HEK293 (cell line): ENCODE measurements at regions of chr6 and their contacts with region 1.

Region 1: GRCh38 chr6:132483779-132484679 is 28.9 kb downstream of the STX7 start:
- H3K4me3 ChIP-seq: no peak overlapping the region
- H3K27ac ChIP-seq: no peak overlapping the region
- H3K4me1 ChIP-seq: peaks cover 5% of the 10 kb centered on the region
- CTCF ChIP-seq: peak; percentile 53

Region 2: DNA sequence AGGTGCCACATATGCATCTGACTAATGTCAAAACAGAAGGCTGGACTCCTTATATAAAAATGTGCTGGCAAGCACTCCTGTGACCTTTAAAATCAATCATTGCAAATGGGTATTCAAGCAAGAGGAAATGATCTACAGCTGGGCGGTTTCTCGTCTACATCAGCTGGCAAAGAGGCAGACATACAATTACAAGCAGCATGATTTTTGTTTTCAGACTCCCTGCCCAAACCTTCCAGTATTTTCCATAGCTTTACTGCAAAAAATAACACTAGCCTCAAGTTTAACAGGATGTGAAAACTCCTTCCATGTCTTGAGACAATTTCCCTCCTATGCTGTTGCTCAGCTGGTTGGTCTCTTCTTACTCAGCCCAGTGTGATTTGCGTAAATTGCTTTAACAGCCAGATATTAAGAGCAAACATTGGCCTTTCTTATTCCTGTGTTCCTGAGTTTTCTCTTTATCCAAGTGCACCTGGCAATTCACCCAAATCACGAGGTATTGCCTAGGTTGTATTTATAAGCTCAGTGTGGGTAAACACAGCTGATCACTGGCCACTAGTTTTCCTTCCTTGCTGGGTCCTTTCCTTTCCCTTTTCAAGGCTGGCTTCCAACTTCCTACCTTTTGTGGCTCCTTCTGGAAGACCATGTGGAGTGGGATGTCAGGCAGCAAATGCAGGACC is 213.2 kb before region 1 on chr6:
- CTCF ChIA-PET with region 1: interaction called, 16 read pairs
- POLR2A ChIA-PET with region 1: no interaction called
- H3K4me3 ChIP-seq: no peak overlapping the region
- H3K27ac ChIP-seq: no peak overlapping the region
- H3K4me1 ChIP-seq: no peaks in the 10 kb centered on the region
- CTCF ChIP-seq: no peak

Region 3: DNA sequence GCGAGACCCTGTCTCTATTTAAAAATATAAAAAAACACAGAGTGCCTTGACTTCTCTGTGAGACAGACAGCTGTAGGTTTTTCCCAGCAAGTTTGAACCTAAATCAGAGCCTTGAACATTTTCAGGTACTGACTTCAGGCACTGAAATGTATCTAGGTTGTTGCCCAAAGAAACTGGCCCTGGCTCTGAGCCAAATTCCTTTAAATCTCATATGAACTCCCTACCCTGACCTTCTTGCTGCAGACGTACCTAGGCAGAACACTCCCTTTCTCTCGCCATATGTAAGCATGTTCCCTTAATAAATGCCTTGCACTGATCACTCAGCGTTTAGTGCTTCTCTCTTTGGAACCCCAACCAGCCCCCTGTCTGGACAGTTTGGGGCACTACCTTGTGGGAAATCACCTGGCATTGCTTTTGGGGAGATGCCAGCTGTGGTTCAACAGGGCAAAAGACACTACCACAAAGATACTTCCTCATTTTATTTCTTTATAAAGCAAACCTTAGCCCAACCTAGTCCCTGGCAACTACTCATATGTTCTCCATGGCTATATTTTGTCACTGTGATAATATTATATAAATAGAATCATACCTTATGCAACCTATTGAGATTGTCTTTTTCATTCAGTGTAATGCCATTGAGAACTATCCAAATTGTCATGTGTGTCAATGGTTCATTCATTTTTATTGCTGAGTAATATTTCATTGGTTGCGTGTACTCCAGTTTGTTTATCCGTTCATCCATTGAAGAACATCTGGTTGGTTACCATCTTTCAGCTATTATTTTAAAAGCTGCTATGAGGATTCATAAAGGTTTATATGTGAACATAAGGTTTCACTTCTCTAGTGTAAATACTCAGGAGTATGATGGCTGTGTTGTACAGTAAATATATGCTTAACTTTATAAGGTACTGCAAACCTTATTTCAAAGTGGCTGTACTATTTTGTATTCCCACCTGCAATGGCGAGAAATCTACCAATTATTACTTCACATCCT is 197.7 kb before region 1 on chr6:
- CTCF ChIA-PET with region 1: interaction called, 289 read pairs
- POLR2A ChIA-PET with region 1: no interaction called
- H3K4me3 ChIP-seq: no peak overlapping the region
- H3K27ac ChIP-seq: no peak overlapping the region
- H3K4me1 ChIP-seq: no peaks in the 10 kb centered on the region
- CTCF ChIP-seq: no peak

Region 4: GRCh38 chr6:132471788-132472187 is 12.2 kb before region 1 on chr6:
- CTCF ChIA-PET with region 1: interaction called, 16 read pairs
- POLR2A ChIA-PET with region 1: no interaction called
- H3K4me3 ChIP-seq: no peak overlapping the region
- H3K27ac ChIP-seq: no peak overlapping the region
- H3K4me1 ChIP-seq: peaks cover 4% of the 10 kb centered on the region; the same call in 1 of the 2 replicates
- CTCF ChIP-seq: no peak

Region 5: GRCh38 chr6:132495604-132496079 is 11.6 kb after region 1 on chr6:
- CTCF ChIA-PET with region 1: interaction called, 43 read pairs
- POLR2A ChIA-PET with region 1: no interaction called
- H3K4me3 ChIP-seq: no peak overlapping the region
- H3K27ac ChIP-seq: no peak overlapping the region
- H3K4me1 ChIP-seq: no peaks in the 10 kb centered on the region
- CTCF ChIP-seq: no peak